MCF 10A (cell line): ENCODE measurements at regions of chr18 and their contacts with region 1.

Region 1: GRCh38 chr18:78875268-78875997 is 104.2 kb upstream of the SALL3 start:
- DNase-seq: peak; percentile 27
- H3K4me3 Mint-ChIP-seq: no peak overlapping the region
- H3K27ac Mint-ChIP-seq: no peak overlapping the region
- H3K4me1 Mint-ChIP-seq: no peaks in the 10 kb centered on the region
- H3K27me3 Mint-ChIP-seq: no peaks in the 10 kb centered on the region
- CTCF ChIP-seq: no peak

Region 2: DNA sequence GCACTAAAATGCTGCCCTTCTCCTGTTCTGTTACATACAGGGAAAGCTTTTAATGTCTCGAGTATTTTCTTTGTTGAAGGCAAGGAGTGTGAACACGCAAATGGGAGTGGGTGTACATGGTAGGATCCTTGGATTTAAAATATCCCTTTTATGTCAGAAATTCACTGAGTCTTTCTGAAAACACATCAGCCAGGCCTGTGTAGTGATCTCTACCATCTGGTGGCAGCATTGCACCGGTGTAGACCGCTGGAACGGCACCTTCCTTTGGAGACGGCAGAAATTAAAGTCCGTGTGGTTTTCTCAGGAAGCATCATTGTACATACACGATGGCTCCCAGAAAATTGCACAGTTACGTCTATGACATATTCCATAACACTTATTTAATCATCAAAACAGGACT is 1110.0 kb before region 1 on chr18:
- CTCF ChIA-PET with region 1: no interaction called
- POLR2A ChIA-PET with region 1: no interaction called
- intact Hi-C with region 1: loop called (anchors 5 kb)
- DNase-seq: peak; percentile 28
- H3K4me3 Mint-ChIP-seq: no peak overlapping the region
- H3K27ac Mint-ChIP-seq: no peak overlapping the region
- H3K4me1 Mint-ChIP-seq: no peaks in the 10 kb centered on the region
- H3K27me3 Mint-ChIP-seq: peaks cover 59% of the 10 kb centered on the region
- CTCF ChIP-seq: peak; percentile 40

Region 3: DNA sequence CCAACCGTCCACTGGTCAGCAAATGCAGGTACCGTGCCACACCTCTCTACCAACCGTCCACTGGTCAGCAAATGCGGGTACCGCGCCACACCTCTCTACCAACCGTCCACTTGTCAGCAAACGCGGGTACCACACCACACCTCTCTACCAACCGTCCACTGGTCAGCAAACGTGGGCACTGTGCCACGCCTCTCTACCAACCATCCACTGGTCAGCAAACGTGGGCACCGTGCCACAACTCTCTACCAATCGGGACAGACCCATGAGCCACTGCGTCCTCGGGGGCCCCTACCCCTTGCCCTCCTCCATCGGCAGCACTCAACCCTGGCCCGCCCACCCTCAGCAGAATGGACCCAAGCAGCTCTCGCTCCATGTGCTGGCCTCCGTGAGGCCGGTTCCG is 122.2 kb before region 1 on chr18:
- CTCF ChIA-PET with region 1: no interaction called
- POLR2A ChIA-PET with region 1: no interaction called
- intact Hi-C with region 1: no loop called
- DNase-seq: no peak
- H3K4me3 Mint-ChIP-seq: no peak overlapping the region
- H3K27ac Mint-ChIP-seq: no peak overlapping the region
- H3K4me1 Mint-ChIP-seq: no peaks in the 10 kb centered on the region
- H3K27me3 Mint-ChIP-seq: no peaks in the 10 kb centered on the region
- CTCF ChIP-seq: no peak